PC-9 (cell line): ENCODE measurements at regions of chr7 and their contacts with region 1.

Region 1: DNA sequence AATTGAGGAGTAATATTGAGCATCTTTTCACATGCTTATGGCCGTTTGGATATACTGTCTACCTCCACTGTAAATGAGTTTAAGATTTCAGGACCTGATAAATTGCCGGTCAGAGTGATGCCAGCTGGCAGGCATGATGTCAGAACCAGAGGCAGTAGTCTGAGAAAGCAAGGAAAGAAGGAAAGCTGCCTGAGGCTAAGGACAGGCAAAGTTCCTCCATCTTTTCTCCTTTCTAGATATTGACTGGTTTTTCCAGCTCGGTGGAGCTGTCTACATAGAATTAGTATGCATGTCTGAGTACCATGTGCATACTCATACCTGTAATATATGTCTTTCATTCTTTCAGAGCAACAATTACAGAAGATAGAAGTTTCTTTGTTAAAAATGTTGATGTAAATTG is 52.3 kb downstream of the CDCA7L start:
- DNase-seq: no peak
- H3K4me3 ChIP-seq: no peak overlapping the region
- H3K27ac ChIP-seq: no peak overlapping the region
- H3K4me1 ChIP-seq: no peaks in the 10 kb centered on the region
- H3K27me3 ChIP-seq: no peaks in the 10 kb centered on the region
- CTCF ChIP-seq: no peak

Region 2: DNA sequence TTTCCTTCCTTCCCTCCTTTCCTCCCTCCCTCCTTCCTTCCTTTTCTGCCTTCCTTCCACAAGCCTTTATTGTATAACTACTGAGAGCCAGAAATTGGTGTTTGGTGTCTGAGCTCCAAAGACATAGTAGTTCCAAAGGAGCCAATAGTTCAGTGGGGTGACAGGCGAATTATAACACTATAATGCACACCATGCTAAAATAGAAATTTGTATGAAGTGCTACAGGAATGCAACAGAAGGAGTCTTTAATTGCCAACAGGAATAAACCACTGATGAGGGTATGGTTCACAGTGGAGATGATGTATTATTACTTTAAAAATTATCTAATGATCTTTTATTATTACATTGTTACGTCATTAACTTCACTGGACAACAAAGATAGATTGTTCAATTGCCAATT is 947.9 kb before region 1 on chr7:
- CTCF ChIA-PET with region 1: no interaction called
- POLR2A ChIA-PET with region 1: no interaction called
- intact Hi-C with region 1: no loop called
- DNase-seq: no peak
- H3K4me3 ChIP-seq: no peak overlapping the region
- H3K27ac ChIP-seq: no peak overlapping the region
- H3K4me1 ChIP-seq: no peaks in the 10 kb centered on the region
- H3K27me3 ChIP-seq: no peaks in the 10 kb centered on the region
- CTCF ChIP-seq: no peak

Region 3: DNA sequence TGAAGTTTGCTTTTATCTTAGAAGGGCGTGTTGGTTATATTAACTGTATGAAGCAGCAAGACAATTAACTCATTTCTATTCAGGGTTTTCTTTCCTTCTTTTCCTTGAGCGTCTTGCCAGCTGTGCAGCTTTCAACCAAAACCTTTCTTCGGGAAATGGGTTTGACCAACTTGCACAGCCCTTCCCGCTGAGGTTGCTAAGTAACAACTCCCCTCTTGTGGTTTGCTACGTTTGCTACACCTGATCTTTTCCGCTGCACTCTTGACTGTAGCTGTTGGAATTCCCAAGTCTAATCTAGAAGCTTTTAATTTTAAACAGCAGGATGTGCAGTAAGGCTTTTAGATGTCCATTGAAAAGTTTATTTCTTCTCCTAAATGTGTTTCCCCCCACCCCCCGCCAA is 64.5 kb before region 1 on chr7:
- CTCF ChIA-PET with region 1: no interaction called
- POLR2A ChIA-PET with region 1: no interaction called
- intact Hi-C with region 1: loop called (anchors 2 kb)
- DNase-seq: no peak
- H3K4me3 ChIP-seq: no peak overlapping the region
- H3K27ac ChIP-seq: no peak overlapping the region
- H3K4me1 ChIP-seq: no peaks in the 10 kb centered on the region
- H3K27me3 ChIP-seq: peaks cover 4% of the 10 kb centered on the region; the same call in 1 of the 2 replicates
- CTCF ChIP-seq: no peak